Gastrocnemius medialis (tissue), 4 donors: ENCODE measurements at regions of chr5 and their contacts with region 1.

Region 1: GRCh38 chr5:102792705-102793104 is 37.6 kb downstream of the PAM start:
- DNase-seq: no peak
- ATAC-seq: no peak
- H3K4me3 ChIP-seq: no peak overlapping the region
- H3K27ac ChIP-seq: peak overlapping the region in 1 of 4 donors; percentile 17
- H3K4me1 ChIP-seq: peaks cover 69 to 85% of the 10 kb centered on the region in 2 donors
- H3K27me3 ChIP-seq: no peaks in the 10 kb centered on the region
- CTCF ChIP-seq: peak in 1 of 5 experiments; percentile 7
- POLR2A ChIP-seq: no peak

Region 2: DNA sequence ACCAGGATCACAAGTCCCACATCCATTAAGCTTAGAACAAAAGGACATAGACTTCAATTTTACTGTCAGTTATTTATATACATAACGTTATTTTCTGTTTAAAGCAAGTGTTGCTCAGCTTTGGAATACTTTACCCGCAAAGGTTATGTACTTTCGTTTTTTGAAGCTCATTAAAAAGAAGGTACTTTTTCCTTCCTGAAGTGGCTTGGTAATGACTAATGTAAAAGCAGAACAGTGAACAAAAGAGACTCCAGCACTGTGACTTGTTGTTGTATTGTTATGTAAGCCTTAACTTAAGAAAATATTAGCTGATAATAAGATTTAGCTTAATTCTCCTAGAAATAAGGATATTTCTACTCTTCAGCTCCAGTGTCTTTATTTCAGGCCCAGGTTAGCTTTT is 196.6 kb before region 1 on chr5:
- in situ Hi-C with region 1: no loop called
- intact Hi-C with region 1: no loop called
- DNase-seq: no peak
- ATAC-seq: no peak
- H3K4me3 ChIP-seq: no peak overlapping the region
- H3K27ac ChIP-seq: no peak overlapping the region
- H3K4me1 ChIP-seq: no peaks in the 10 kb centered on the region
- H3K27me3 ChIP-seq: no peaks in the 10 kb centered on the region
- CTCF ChIP-seq: no peak
- POLR2A ChIP-seq: no peak

Region 3: DNA sequence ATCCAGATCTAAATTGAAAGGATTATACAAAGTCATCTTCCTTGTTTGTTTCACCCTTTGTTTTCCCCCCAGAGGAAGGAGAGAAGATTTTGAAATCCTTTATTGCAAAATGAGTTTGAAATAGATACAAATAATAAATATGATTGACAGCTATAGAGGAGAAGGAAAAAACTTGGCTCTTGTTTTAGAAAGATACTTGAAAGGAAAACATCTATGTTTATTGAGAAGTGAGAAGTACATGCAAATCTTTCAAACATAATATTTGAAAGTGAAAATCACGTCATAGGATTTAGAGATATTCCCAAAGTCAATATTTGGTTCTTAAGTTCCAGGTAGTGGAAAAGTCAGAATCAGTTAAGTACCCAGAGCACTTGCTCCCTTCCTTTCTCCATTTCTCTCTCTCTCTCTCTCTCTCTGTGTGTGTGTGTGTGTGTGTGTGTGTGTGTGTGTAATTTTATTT is 10.4 kb before region 1 on chr5:
- in situ Hi-C with region 1: no loop called
- intact Hi-C with region 1: loop called (anchors 2 kb)
- DNase-seq: no peak
- ATAC-seq: peak; percentile 46 to 57
- H3K4me3 ChIP-seq: peak overlapping the region in 2 of 4 donors; percentile 6 to 11
- H3K27ac ChIP-seq: peak overlapping the region; percentile 65 to 78 (median 76)
- H3K4me1 ChIP-seq: peaks cover 49 to 59% of the 10 kb centered on the region in 2 donors
- H3K27me3 ChIP-seq: no peaks in the 10 kb centered on the region
- CTCF ChIP-seq: no peak
- POLR2A ChIP-seq: no peak

Region 4: GRCh38 chr5:102865510-102866236 is 73.0 kb after region 1 on chr5:
- in situ Hi-C with region 1: loop called in 1 of 4 experiments (anchors 10 kb)
- intact Hi-C with region 1: loop called (anchors 5 kb)
- DNase-seq: peak; percentile 76 to 79
- ATAC-seq: peak; percentile 92 to 95
- H3K4me3 ChIP-seq: peak overlapping the region; percentile 67 to 76 (median 71)
- H3K27ac ChIP-seq: peak overlapping the region; percentile 84 to 94 (median 92)
- H3K4me1 ChIP-seq: peaks cover 51 to 62% of the 10 kb centered on the region in 2 donors
- H3K27me3 ChIP-seq: no peaks in the 10 kb centered on the region
- CTCF ChIP-seq: no peak
- POLR2A ChIP-seq: peak; percentile 57 to 84

Region 5: GRCh38 chr5:102971697-102972293 is 179.1 kb after region 1 on chr5:
- in situ Hi-C with region 1: loop called in 3 of 4 experiments (anchors 10 to 25 kb)
- intact Hi-C with region 1: no loop called
- DNase-seq: no peak
- ATAC-seq: peak; percentile 48 to 70
- H3K4me3 ChIP-seq: no peak overlapping the region
- H3K27ac ChIP-seq: peak overlapping the region in 1 of 4 donors; percentile 38
- H3K4me1 ChIP-seq: peaks cover 27 to 38% of the 10 kb centered on the region in 2 donors
- H3K27me3 ChIP-seq: no peaks in the 10 kb centered on the region
- CTCF ChIP-seq: peak in 3 of 5 experiments; percentile 41 to 54 (median 53)
- POLR2A ChIP-seq: no peak

Region 6: DNA sequence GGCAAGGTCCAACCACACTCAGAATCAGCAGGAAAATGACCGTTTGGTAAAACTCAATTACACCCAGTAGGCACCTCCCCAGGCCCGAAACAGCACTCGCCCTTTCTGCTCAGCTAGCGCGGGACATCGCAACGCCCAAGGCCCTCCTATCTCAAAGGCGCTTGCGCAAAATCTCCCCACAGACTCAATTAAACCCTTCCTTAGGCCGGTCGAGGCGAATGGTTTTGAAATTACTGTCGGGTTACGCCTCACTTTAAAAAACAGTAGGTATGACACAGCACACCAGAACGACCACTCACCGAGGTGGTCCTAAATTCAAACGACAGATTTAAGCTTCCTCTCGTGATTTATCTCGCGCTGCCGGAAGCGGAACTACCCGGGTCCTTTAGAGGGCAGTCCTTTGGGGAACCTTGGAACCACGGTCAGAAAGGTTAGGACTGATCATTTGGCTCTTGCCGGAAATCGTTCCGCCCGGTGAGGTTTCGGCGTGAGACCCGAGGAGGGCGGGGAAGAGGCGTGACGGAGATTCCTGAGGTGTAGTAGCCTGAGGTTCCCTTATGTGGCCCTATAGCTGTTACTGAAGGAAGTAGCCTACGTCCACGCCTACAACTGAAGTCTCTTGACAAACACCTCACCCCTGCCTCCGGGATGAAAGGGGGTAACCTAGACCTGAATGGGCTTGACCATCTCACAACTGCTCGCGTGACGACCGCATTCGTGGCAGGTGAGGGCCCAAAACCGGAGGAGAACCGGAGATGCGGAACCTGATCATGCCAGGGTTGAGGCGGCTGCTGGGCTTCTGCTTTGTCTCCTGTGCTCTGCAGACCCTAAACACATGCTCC is 327.3 kb after region 1 on chr5 and contains the starts of genes GIN1 and PPIP5K2:
- in situ Hi-C with region 1: no loop called
- intact Hi-C with region 1: no loop called
- DNase-seq: peak; percentile 92 to 94
- ATAC-seq: peak; percentile 98 to 100
- H3K4me3 ChIP-seq: peak within 1 kb of the TSS; percentile 70 to 91 (median 86)
- H3K27ac ChIP-seq: peak within 1 kb of the TSS; percentile 86 to 96 (median 92)
- H3K4me1 ChIP-seq: peaks cover 28 to 30% of the 10 kb centered on the region in 2 donors
- H3K27me3 ChIP-seq: no peaks in the 10 kb centered on the region
- CTCF ChIP-seq: no peak
- POLR2A ChIP-seq: peak; percentile 46 to 53
- total RNA-seq, gene GIN1: 4.6 to 11.2 (median 6.9) TPM
- total RNA-seq, gene PPIP5K2: 3.5 to 7.0 (median 4.4) TPM